ENCODE measurements at regions of chr6 and their contacts with region 1.

Region 1: GRCh38 chr6:110815217-110816109 is at the start of gene CDK19:
- DNase-seq: peak; percentile 93
- CTCF ChIP-seq: no peak

Region 2: DNA sequence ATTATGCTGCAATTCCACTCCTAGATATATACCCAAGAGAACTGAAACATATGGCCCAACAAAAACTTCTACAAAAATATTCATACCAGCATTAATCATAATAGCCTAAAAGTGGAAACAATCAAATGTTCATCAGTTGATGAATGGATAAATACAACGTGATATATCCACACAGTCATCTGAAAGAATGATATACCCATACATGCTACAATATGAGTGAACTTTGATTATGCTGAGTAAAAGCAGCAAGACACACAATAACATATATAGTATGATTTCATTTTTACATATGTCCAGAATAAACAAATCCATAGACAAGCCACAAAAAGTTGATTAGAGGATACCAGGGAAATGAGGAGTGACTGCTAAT is 30.9 kb before region 1 on chr6:
- CTCF ChIA-PET with region 1: interaction called, 4 read pairs
- POLR2A ChIA-PET with region 1: interaction called, 12 read pairs
- DNase-seq: no peak
- CTCF ChIP-seq: no peak

Region 3: GRCh38 chr6:110826236-110827129 is 11.0 kb after region 1 on chr6:
- CTCF ChIA-PET with region 1: interaction called, 6 read pairs
- POLR2A ChIA-PET with region 1: interaction called, 16 read pairs
- DNase-seq: no peak
- CTCF ChIP-seq: no peak